ENCODE measurements at regions of chr11 and their contacts with region 1.

Region 1: GRCh38 chr11:57249384-57250319 is 12.6 kb upstream of the APLNR start:
- DNase-seq: peak; percentile 27
- ATAC-seq: peak; percentile 70
- H3K4me3 ChIP-seq: no peak overlapping the region
- H3K27ac ChIP-seq: no peak overlapping the region
- H3K4me1 ChIP-seq: no peaks in the 10 kb centered on the region
- H3K27me3 ChIP-seq: peaks cover 8% of the 10 kb centered on the region; the same call in 1 of the 2 replicates
- CTCF ChIP-seq: peak; percentile 72 to 90 (median 84); a peak in 5 of 6 replicates
- POLR2A ChIP-seq: no peak
- RAD21 ChIP-seq: peak; percentile 84

Region 2: DNA sequence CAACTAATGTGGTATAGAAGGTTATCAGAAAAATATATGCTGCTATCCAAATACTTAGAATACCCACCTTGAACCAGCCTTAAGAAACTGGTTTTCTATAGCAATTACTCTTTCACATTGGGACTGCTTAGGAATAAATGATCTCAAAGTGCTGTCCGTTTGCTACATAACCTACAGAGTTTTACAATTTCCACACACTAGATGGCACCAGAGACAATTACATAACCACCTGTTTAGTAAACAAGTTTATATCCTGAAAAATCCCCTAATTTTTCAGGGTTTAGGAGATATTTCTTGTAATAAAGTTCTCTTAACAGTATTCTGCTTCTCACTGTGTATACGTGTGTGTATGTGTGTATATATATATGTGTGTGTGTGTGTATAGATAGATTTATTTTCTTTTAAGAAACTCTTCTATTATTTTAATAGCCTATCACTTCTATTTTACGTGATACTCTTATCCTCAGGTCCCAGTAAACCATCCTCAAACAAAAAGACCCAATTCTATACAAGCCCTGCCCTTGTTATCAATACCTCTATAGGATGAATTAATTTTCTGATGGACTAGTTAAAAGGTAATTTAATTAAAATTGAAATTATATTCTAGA is 1306.8 kb before region 1 on chr11:
- CTCF ChIA-PET with region 1: no interaction called
- POLR2A ChIA-PET with region 1: no interaction called
- RAD21 ChIA-PET with region 1: no interaction called
- intact Hi-C with region 1: loop called (anchors 10 kb)
- DNase-seq: peak; percentile 18
- ATAC-seq: no peak
- H3K4me3 ChIP-seq: no peak overlapping the region
- H3K27ac ChIP-seq: no peak overlapping the region
- H3K4me1 ChIP-seq: no peaks in the 10 kb centered on the region
- H3K27me3 ChIP-seq: no peaks in the 10 kb centered on the region
- CTCF ChIP-seq: peak in 2 of 3 experiments; percentile 29 to 49; a peak in 3 of 6 replicates
- POLR2A ChIP-seq: no peak
- RAD21 ChIP-seq: no peak

Region 3: GRCh38 chr11:57001674-57002401 is 247.8 kb before region 1 on chr11:
- CTCF ChIA-PET with region 1: interaction called, 3 read pairs
- POLR2A ChIA-PET with region 1: no interaction called
- RAD21 ChIA-PET with region 1: no interaction called
- intact Hi-C with region 1: loop called (anchors 5 kb)
- DNase-seq: no peak
- ATAC-seq: peak; percentile 62; the same call in 1 of the 2 replicates
- H3K4me3 ChIP-seq: no peak overlapping the region
- H3K27ac ChIP-seq: no peak overlapping the region
- H3K4me1 ChIP-seq: no peaks in the 10 kb centered on the region
- H3K27me3 ChIP-seq: no peaks in the 10 kb centered on the region
- CTCF ChIP-seq: peak; percentile 11 to 67 (median 41); a peak in 4 of 6 replicates
- POLR2A ChIP-seq: no peak
- RAD21 ChIP-seq: peak; percentile 43

Region 4: DNA sequence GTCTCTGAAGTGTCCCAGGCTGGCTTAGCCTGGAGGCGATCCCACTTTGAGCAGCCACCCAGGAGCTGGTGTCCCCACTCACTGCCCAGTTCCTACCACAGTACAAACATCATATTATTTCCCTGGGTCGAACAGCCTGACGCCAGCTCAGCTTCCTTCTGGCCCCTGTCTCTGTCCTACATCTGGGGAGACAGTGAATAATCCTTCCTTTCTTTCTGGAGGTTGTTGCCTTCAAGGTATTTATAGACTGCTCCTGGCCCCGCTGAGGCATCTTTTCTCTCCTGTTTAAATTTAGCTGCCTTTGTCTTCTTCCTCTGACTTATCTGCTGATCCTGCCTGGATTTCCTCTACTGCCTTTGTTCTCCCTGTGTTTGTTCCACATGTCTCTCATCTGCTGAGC is 124.7 kb before region 1 on chr11:
- CTCF ChIA-PET with region 1: interaction called, 105 read pairs
- POLR2A ChIA-PET with region 1: no interaction called
- RAD21 ChIA-PET with region 1: no interaction called
- intact Hi-C with region 1: no loop called
- DNase-seq: no peak
- ATAC-seq: no peak
- H3K4me3 ChIP-seq: no peak overlapping the region
- H3K27ac ChIP-seq: no peak overlapping the region
- H3K4me1 ChIP-seq: no peaks in the 10 kb centered on the region; a peak in 1 of 4 replicates
- H3K27me3 ChIP-seq: peaks cover 58% of the 10 kb centered on the region
- CTCF ChIP-seq: no peak
- POLR2A ChIP-seq: no peak
- RAD21 ChIP-seq: no peak

Region 5: DNA sequence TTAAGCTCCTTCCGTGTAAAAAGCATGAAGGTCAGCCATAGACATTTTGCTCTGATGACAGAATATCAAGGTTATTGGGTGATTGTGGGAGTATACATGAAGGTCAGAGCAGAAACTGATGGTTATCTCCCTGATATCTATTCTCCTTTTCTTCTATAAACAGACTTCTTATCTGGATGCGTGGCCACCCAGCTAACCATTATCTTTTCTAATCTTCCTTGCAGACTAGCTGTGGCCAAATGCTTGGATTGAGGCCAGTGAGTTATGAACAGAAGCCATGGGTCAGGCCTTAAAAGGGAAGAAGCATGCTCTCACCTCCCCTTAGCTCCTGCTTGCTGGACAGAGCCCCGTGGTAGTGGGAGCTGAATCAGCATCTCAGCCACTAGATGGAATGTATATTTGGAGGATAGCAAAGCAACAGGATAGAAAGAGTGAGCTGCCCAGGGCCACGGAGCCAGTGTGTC is 99.2 kb before region 1 on chr11:
- CTCF ChIA-PET with region 1: interaction called, 15 read pairs
- POLR2A ChIA-PET with region 1: no interaction called
- RAD21 ChIA-PET with region 1: no interaction called
- intact Hi-C with region 1: no loop called
- DNase-seq: no peak
- ATAC-seq: no peak
- H3K4me3 ChIP-seq: no peak overlapping the region
- H3K27ac ChIP-seq: no peak overlapping the region
- H3K4me1 ChIP-seq: no peaks in the 10 kb centered on the region
- H3K27me3 ChIP-seq: peaks cover 49% of the 10 kb centered on the region
- CTCF ChIP-seq: no peak
- POLR2A ChIP-seq: no peak
- RAD21 ChIP-seq: no peak